B cell (primary cell): ENCODE measurements at regions of chr2 and their contacts with region 1.

Region 1: GRCh38 chr2:233251306-233252116 is at the start of gene ATG16L1:
- DNase-seq: peak; percentile 96
- ATAC-seq: peak; percentile 99
- H3K4me3 ChIP-seq: peak within 1 kb of the TSS; percentile 81 to 94 (median 93)
- H3K4me3 Mint-ChIP-seq: peak within 1 kb of the TSS; percentile 96
- H3K27ac ChIP-seq: peak within 1 kb of the TSS; percentile 72 to 81
- H3K27ac Mint-ChIP-seq: peak within 1 kb of the TSS; percentile 91
- H3K4me1 ChIP-seq: peaks cover 20 to 28% of the 10 kb centered on the region in 2 donors
- H3K4me1 Mint-ChIP-seq: peaks cover 49% of the 10 kb centered on the region
- H3K27me3 ChIP-seq: no peaks in the 10 kb centered on the region
- H3K27me3 Mint-ChIP-seq: no peaks in the 10 kb centered on the region
- CTCF ChIP-seq: peak; percentile 93
- total RNA-seq, gene ATG16L1: 69.9 TPM in 2 replicates

Region 2: GRCh38 chr2:232611551-232612218 is 639.8 kb before region 1 on chr2:
- CTCF ChIA-PET with region 1: no interaction called
- POLR2A ChIA-PET with region 1: no interaction called
- intact Hi-C with region 1: loop called (anchors 1 kb)
- DNase-seq: peak; percentile 64
- ATAC-seq: peak; percentile 39
- H3K4me3 ChIP-seq: no peak overlapping the region
- H3K4me3 Mint-ChIP-seq: no peak overlapping the region
- H3K27ac ChIP-seq: no peak overlapping the region
- H3K27ac Mint-ChIP-seq: no peak overlapping the region
- H3K4me1 ChIP-seq: no peaks in the 10 kb centered on the region
- H3K4me1 Mint-ChIP-seq: no peaks in the 10 kb centered on the region
- H3K27me3 ChIP-seq: peaks cover 0 to 2% (median 0%) of the 10 kb centered on the region in 4 experiments
- H3K27me3 Mint-ChIP-seq: no peaks in the 10 kb centered on the region
- CTCF ChIP-seq: peak; percentile 83

Region 3: GRCh38 chr2:233053928-233054784 is 197.4 kb before region 1 on chr2:
- CTCF ChIA-PET with region 1: interaction called, 19 read pairs
- POLR2A ChIA-PET with region 1: no interaction called
- intact Hi-C with region 1: no loop called
- DNase-seq: peak; percentile 76
- ATAC-seq: peak; percentile 81
- H3K4me3 ChIP-seq: no peak overlapping the region
- H3K4me3 Mint-ChIP-seq: peak overlapping the region; percentile 6
- H3K27ac ChIP-seq: no peak overlapping the region
- H3K27ac Mint-ChIP-seq: peak overlapping the region; percentile 56
- H3K4me1 ChIP-seq: peaks cover 9 to 14% of the 10 kb centered on the region in 2 donors
- H3K4me1 Mint-ChIP-seq: peaks cover 18% of the 10 kb centered on the region
- H3K27me3 ChIP-seq: no peaks in the 10 kb centered on the region
- H3K27me3 Mint-ChIP-seq: no peaks in the 10 kb centered on the region
- CTCF ChIP-seq: peak; percentile 95

Region 4: GRCh38 chr2:233100192-233100998 is 151.1 kb before region 1 on chr2:
- CTCF ChIA-PET with region 1: interaction called, 10 read pairs
- POLR2A ChIA-PET with region 1: no interaction called
- intact Hi-C with region 1: loop called (anchors 1 kb)
- DNase-seq: peak; percentile 93
- ATAC-seq: peak; percentile 86
- H3K4me3 ChIP-seq: peak overlapping the region in 4 of 5 experiments; percentile 18 to 55 (median 40)
- H3K4me3 Mint-ChIP-seq: peak overlapping the region; percentile 83
- H3K27ac ChIP-seq: peak overlapping the region; percentile 96 to 98
- H3K27ac Mint-ChIP-seq: peak overlapping the region; percentile 97
- H3K4me1 ChIP-seq: peaks cover 79 to 83% of the 10 kb centered on the region in 2 donors
- H3K4me1 Mint-ChIP-seq: peaks cover 80% of the 10 kb centered on the region
- H3K27me3 ChIP-seq: no peaks in the 10 kb centered on the region
- H3K27me3 Mint-ChIP-seq: no peaks in the 10 kb centered on the region
- CTCF ChIP-seq: no peak

Region 5: GRCh38 chr2:233142355-233142897 is 109.1 kb before region 1 on chr2:
- CTCF ChIA-PET with region 1: no interaction called
- POLR2A ChIA-PET with region 1: no interaction called
- intact Hi-C with region 1: no loop called
- DNase-seq: peak; percentile 72
- ATAC-seq: peak; percentile 82
- H3K4me3 ChIP-seq: no peak overlapping the region
- H3K4me3 Mint-ChIP-seq: peak overlapping the region; percentile 54
- H3K27ac ChIP-seq: peak overlapping the region; percentile 38 to 54
- H3K27ac Mint-ChIP-seq: peak overlapping the region; percentile 91
- H3K4me1 ChIP-seq: peaks cover 13 to 19% of the 10 kb centered on the region in 2 donors
- H3K4me1 Mint-ChIP-seq: peaks cover 34% of the 10 kb centered on the region
- H3K27me3 ChIP-seq: no peaks in the 10 kb centered on the region
- H3K27me3 Mint-ChIP-seq: no peaks in the 10 kb centered on the region
- CTCF ChIP-seq: no peak

Region 6: DNA sequence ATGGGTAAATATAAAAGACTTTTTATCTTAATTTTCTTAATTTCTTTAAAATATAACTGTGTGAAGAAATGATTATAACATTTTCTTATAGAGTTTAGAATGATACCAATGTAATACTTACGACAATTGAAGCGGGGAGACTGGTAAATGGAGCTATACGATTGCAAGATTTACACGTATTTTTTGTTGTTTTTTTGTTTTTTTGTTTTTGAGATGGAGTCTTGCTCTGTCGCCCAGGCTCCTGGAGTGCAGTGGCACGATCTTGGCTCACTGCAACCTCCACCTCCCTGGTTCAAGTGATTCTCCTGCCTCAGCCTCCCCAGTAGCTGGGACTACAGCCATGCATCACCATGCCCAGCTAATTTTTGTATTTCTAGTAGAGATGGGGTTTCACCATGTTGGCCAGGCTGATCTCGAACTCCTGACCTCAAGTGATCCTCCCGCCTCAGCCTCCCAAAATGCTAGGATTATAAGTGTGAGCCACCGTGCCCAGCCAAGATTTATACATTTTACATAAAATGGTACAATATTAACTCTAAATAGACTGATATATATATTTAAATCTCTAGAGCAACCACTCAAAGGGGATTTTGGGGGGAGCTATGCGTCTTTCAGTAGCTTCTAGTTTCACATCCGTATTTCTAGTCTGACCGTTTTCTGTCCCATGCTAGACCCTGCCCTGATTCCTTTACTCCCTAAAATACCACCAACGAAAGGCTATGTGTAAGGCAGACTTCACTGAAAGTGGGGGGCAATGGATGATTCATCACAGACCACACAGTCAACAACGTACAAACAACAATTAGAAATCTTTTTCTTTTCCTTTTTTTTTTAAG is 28.2 kb before region 1 on chr2:
- CTCF ChIA-PET with region 1: interaction called, 7 read pairs
- POLR2A ChIA-PET with region 1: interaction called, 3 read pairs
- intact Hi-C with region 1: loop called (anchors 1 kb)
- DNase-seq: peak; percentile 62
- ATAC-seq: peak; percentile 80
- H3K4me3 ChIP-seq: no peak overlapping the region
- H3K4me3 Mint-ChIP-seq: peak overlapping the region; percentile 51
- H3K27ac ChIP-seq: no peak overlapping the region
- H3K27ac Mint-ChIP-seq: peak overlapping the region; percentile 44
- H3K4me1 ChIP-seq: peaks cover 0 to 6% of the 10 kb centered on the region in 2 donors
- H3K4me1 Mint-ChIP-seq: peaks cover 9% of the 10 kb centered on the region
- H3K27me3 ChIP-seq: no peaks in the 10 kb centered on the region
- H3K27me3 Mint-ChIP-seq: no peaks in the 10 kb centered on the region
- CTCF ChIP-seq: no peak

Region 7: GRCh38 chr2:233353769-233354499 is 102.4 kb after region 1 on chr2 and contains the start of gene DGKD:
- CTCF ChIA-PET with region 1: interaction called, 3 read pairs
- POLR2A ChIA-PET with region 1: no interaction called
- intact Hi-C with region 1: loop called (anchors 5 kb)
- DNase-seq: peak; percentile 90
- ATAC-seq: peak; percentile 77
- H3K4me3 ChIP-seq: peak within 1 kb of the TSS; percentile 82 to 89 (median 83)
- H3K4me3 Mint-ChIP-seq: peak within 1 kb of the TSS; percentile 96
- H3K27ac ChIP-seq: peak within 1 kb of the TSS; percentile 89 to 97
- H3K27ac Mint-ChIP-seq: peak within 1 kb of the TSS; percentile 96
- H3K4me1 ChIP-seq: peaks cover 79 to 85% of the 10 kb centered on the region in 2 donors
- H3K4me1 Mint-ChIP-seq: peaks cover 86% of the 10 kb centered on the region
- H3K27me3 ChIP-seq: no peaks in the 10 kb centered on the region
- H3K27me3 Mint-ChIP-seq: no peaks in the 10 kb centered on the region
- CTCF ChIP-seq: peak; percentile 14
- total RNA-seq, gene DGKD: 396 and 397 TPM in 2 replicates